ENCODE measurements at regions of chr1 and their contacts with region 1.

Region 1: GRCh38 chr1:222739465-222739864 is 2.5 kb downstream of the FAM177B start:
- DNase-seq: no peak
- H3K4me3 Mint-ChIP-seq: no peak overlapping the region
- H3K27ac Mint-ChIP-seq: no peak overlapping the region
- H3K4me1 Mint-ChIP-seq: no peaks in the 10 kb centered on the region
- H3K27me3 Mint-ChIP-seq: no peaks in the 10 kb centered on the region

Region 2: GRCh38 chr1:222754366-222755139 is 15.1 kb after region 1 on chr1:
- CTCF ChIA-PET with region 1: no interaction called
- POLR2A ChIA-PET with region 1: no interaction called
- intact Hi-C with region 1: no loop called
- DNase-seq: no peak
- H3K4me3 Mint-ChIP-seq: no peak overlapping the region
- H3K27ac Mint-ChIP-seq: no peak overlapping the region
- H3K4me1 Mint-ChIP-seq: no peaks in the 10 kb centered on the region
- H3K27me3 Mint-ChIP-seq: peaks cover 7% of the 10 kb centered on the region

Region 3: GRCh38 chr1:223087291-223088255 is 348.1 kb after region 1 on chr1:
- CTCF ChIA-PET with region 1: interaction called, 12 read pairs
- POLR2A ChIA-PET with region 1: no interaction called
- intact Hi-C with region 1: no loop called
- DNase-seq: no peak
- H3K4me3 Mint-ChIP-seq: no peak overlapping the region
- H3K27ac Mint-ChIP-seq: no peak overlapping the region
- H3K4me1 Mint-ChIP-seq: no peaks in the 10 kb centered on the region
- H3K27me3 Mint-ChIP-seq: no peaks in the 10 kb centered on the region

Measured in activated CD4-positive, alpha-beta memory T cell treated with anti-CD3 and anti-CD28 coated beads for 36 hours (primary cell).